ENCODE measurements at regions of chr19 and their contacts with region 1.

Region 1: GRCh38 chr19:7674010-7675005 is 2.6 kb upstream of the MCEMP1 start:
- DNase-seq: peak in 3 of 6 donors; percentile 30 to 46 (median 45)
- ATAC-seq: peak; percentile 57 to 89 (median 83)
- H3K4me3 ChIP-seq: no peak overlapping the region
- H3K27ac ChIP-seq: no peak overlapping the region
- H3K4me1 ChIP-seq: no peaks in the 10 kb centered on the region
- H3K27me3 ChIP-seq: peaks cover 0 to 6% (median 0%) of the 10 kb centered on the region in 4 donors
- CTCF ChIP-seq: no peak

Region 2: DNA sequence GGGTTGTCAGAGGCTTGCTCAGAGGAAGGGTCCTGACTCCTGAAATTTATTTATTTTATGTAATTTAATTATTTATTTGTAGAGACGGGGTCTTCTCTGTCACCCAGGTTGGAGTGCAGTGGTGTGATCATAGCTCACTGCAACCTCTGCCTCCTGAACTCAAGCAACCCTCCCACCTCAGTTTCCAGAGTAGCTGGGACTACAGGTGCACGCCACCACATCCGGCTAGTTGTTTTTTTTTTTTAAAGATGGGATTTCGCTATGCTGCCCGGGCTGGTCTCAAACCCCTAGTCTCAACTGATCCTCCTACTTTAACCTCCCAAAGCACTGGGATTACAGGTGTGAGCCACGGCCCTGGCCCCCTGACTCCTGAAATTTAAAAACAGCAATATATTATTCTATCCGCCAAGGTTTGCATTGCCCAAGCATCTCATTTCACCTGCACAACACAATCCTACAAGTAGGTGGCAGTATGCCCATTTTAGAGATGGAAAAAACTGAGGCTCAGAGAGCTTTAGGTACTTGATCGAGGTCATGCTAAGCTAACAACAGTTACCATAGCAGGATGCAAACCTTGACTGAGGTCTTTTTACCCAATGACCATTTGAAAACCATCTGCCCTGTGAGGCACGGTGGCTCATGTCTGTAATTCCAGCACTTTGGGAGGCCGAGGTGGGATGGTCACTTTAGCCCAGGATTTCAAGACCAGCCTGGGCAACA is 307.4 kb before region 1 on chr19:
- intact Hi-C with region 1: loop called in 1 of 3 experiments (anchors 10 kb)
- DNase-seq: peak in 1 of 6 donors; percentile 6
- ATAC-seq: peak in 2 of 4 donors; percentile 53 to 69
- H3K4me3 ChIP-seq: no peak overlapping the region
- H3K27ac ChIP-seq: no peak overlapping the region
- H3K4me1 ChIP-seq: no peaks in the 10 kb centered on the region
- H3K27me3 ChIP-seq: no peaks in the 10 kb centered on the region
- CTCF ChIP-seq: peak in 1 of 4 donors; percentile 18

Region 3: GRCh38 chr19:7500811-7501450 is 173.4 kb before region 1 on chr19:
- intact Hi-C with region 1: no loop called
- DNase-seq: peak; percentile 45 to 89 (median 61)
- ATAC-seq: peak; percentile 58 to 88 (median 82)
- H3K4me3 ChIP-seq: peak overlapping the region in 3 of 4 donors; percentile 31 to 49 (median 34)
- H3K27ac ChIP-seq: no peak overlapping the region
- H3K4me1 ChIP-seq: peaks cover 0 to 12% (median 0%) of the 10 kb centered on the region in 3 donors
- H3K27me3 ChIP-seq: no peaks in the 10 kb centered on the region
- CTCF ChIP-seq: no peak

Region 4: DNA sequence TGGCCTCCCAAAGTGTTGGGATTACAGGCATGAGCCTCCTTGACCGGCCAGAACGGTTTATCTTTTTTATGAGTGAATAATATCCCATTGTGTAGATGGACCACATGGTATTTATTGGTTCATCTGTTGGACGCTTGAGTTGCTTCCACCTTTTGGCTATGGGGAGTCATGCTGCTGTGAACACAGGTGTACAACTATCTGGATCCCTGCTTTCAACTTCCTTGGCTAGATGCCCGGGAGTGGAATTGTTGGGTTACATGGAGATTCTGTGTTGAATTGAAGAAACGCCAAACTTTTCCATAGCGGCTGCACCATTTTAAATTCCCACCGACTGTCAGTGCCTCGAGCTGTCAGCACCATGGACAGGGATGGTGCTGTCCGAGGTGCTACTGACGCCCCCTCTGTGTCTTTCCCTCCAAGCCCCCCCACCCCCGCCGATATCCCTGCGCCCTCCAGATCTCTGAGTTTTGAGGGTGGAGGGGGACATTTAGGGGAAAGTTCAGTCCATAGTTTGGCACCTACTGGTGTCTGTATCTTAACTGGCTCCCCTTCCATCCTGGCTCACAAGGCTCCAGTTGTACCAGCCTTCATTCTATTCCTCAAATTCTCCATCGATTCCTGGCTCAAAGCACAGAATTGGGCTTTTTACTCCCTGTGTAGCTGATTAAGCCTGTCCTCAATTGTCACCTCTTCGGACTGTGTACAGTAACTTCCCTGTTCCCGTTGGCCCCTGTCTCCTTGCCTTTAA is 111.5 kb before region 1 on chr19:
- intact Hi-C with region 1: loop called in 1 of 3 experiments (anchors 5 kb)
- DNase-seq: no peak
- ATAC-seq: peak in 3 of 4 donors; percentile 24 to 57 (median 53)
- H3K4me3 ChIP-seq: no peak overlapping the region
- H3K27ac ChIP-seq: no peak overlapping the region
- H3K4me1 ChIP-seq: no peaks in the 10 kb centered on the region
- H3K27me3 ChIP-seq: no peaks in the 10 kb centered on the region
- CTCF ChIP-seq: no peak

Region 5: DNA sequence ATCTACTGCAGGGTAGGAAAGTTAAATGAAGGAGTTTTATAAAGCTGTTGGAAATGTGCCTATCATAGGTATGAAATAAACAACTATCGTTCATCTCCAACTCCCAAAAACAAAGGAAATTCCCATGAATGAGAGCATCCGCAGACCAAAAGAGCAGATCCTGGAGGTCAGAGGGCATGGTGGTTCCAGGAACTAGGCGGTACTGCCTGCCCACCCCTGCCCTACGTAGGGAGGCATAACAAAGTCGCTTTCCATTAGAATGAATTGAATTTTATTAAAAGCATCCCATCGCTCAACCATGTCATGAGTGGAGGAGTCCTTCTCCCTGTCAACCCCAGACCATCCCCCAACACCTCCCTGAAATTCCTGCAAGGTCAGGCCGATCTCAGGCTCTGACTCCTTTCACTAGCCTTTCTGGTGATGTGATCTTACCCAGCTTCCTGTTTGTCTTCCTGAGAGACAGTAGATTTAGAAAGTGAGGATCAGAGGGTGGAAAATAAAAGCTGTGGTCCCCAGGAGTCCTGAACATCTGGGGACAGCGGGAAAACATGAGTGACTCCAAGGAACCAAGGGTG is 88.5 kb after region 1 on chr19 and contains the start of gene CLEC4M:
- intact Hi-C with region 1: no loop called
- DNase-seq: no peak
- ATAC-seq: no peak
- H3K4me3 ChIP-seq: no peak within 1 kb of the TSS
- H3K27ac ChIP-seq: no peak within 1 kb of the TSS
- H3K4me1 ChIP-seq: no peaks in the 10 kb centered on the region
- H3K27me3 ChIP-seq: no peaks in the 10 kb centered on the region
- CTCF ChIP-seq: no peak
- total RNA-seq, gene CLEC4M: not detected

Region 6: DNA sequence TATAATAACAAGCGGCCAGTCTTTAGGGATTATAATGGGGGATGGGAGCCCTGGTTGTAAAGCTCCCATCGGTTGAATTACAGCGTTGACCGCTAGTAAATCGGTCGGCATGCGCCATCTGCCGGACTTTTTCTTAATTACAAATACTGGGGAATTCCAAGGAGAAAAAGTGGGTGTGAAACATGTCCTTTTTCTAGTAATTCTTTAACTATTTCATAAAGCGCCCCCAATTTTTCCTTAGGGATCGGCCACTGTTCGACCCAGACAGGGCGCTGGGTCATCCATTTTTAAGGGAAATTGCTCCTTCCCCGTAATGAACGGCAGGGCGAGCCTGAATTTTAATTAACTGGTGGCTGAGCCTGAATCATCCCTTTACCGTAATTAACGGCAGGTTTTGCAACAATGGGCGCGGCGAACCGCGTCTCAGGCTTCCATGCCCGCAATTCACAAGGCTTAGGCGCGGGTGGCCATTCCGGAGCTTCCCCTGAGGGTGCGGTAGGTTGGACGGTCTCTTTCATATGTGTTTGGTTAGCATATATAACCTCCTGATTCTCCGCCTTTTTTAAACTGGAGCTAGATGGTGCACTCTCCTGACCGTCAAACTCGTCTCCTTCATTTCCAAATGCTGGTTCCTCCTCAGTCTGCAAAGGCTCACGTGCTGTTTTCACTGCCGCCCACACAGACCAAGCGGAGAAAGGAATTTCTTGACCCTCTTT is 125.5 kb after region 1 on chr19:
- intact Hi-C with region 1: loop called in 1 of 3 experiments (anchors 10 kb)
- DNase-seq: peak in 5 of 6 donors; percentile 44 to 72 (median 61)
- ATAC-seq: peak; percentile 82 to 99 (median 95)
- H3K4me3 ChIP-seq: peak overlapping the region in 1 of 4 donors; percentile 17
- H3K27ac ChIP-seq: no peak overlapping the region
- H3K4me1 ChIP-seq: peaks cover 0 to 3% (median 0%) of the 10 kb centered on the region in 3 donors
- H3K27me3 ChIP-seq: peaks cover 0 to 14% (median 0%) of the 10 kb centered on the region in 4 donors
- CTCF ChIP-seq: peak; percentile 7 to 52 (median 24)